ENCODE measurements at regions of chr10 and their contacts with region 1.

Region 1: DNA sequence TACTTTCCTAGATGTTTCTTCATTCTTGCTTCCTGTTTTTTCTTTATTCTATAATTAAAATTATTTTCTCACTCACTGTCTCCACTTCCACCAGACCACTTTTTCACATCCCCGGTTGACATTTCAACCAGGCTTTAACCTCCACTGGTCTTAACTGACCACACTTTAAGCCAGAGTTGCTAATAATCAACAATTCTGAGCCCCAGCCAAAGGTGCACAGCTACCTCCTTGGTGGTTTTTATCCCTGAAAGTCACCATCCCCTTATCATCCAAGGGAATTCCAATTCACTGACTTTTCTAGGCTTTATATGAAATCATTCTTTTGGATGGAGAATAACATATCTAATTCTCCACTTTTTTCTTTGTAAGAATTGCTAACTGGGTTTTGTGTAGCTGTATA is 138.9 kb downstream of the FRMD4A start:
- DNase-seq: no peak
- ATAC-seq: no peak
- H3K4me3 Mint-ChIP-seq: no peak overlapping the region
- H3K27ac Mint-ChIP-seq: no peak overlapping the region
- H3K4me1 Mint-ChIP-seq: peaks cover 25% of the 10 kb centered on the region
- H3K27me3 Mint-ChIP-seq: no peaks in the 10 kb centered on the region
- CTCF ChIP-seq: no peak

Region 2: GRCh38 chr10:14240253-14241189 is 48.6 kb after region 1 on chr10:
- CTCF ChIA-PET with region 1: interaction called, 16 read pairs
- POLR2A ChIA-PET with region 1: no interaction called
- DNase-seq: peak; percentile 14
- ATAC-seq: peak; percentile 73
- H3K4me3 Mint-ChIP-seq: no peak overlapping the region
- H3K27ac Mint-ChIP-seq: no peak overlapping the region
- H3K4me1 Mint-ChIP-seq: peaks cover 32% of the 10 kb centered on the region
- H3K27me3 Mint-ChIP-seq: peaks cover 4% of the 10 kb centered on the region
- CTCF ChIP-seq: no peak

Region 3: GRCh38 chr10:14478604-14479003 is 286.7 kb after region 1 on chr10:
- CTCF ChIA-PET with region 1: interaction called, 60 read pairs
- POLR2A ChIA-PET with region 1: no interaction called
- DNase-seq: peak; percentile 58
- ATAC-seq: peak; percentile 94
- H3K4me3 Mint-ChIP-seq: no peak overlapping the region
- H3K27ac Mint-ChIP-seq: no peak overlapping the region; the same call in none of the 2 replicates
- H3K4me1 Mint-ChIP-seq: peaks cover 11% of the 10 kb centered on the region
- H3K27me3 Mint-ChIP-seq: no peaks in the 10 kb centered on the region
- CTCF ChIP-seq: peak; percentile 41; the same call in 1 of the 2 replicates

Region 4: GRCh38 chr10:14543046-14543903 is 351.4 kb after region 1 on chr10:
- CTCF ChIA-PET with region 1: interaction called, 10 read pairs
- POLR2A ChIA-PET with region 1: no interaction called
- DNase-seq: no peak
- ATAC-seq: peak; percentile 34; the same call in 1 of the 2 replicates
- H3K4me3 Mint-ChIP-seq: no peak overlapping the region
- H3K27ac Mint-ChIP-seq: peak overlapping the region; percentile 69; the same call in 1 of the 2 replicates
- H3K4me1 Mint-ChIP-seq: peaks cover 25% of the 10 kb centered on the region
- H3K27me3 Mint-ChIP-seq: no peaks in the 10 kb centered on the region
- CTCF ChIP-seq: no peak

Measured in WTC11 (cell line).